Activated CD4-positive, alpha-beta T cell treated with anti-CD3 and anti-CD28 coated beads for 36 hours (primary cell): ENCODE measurements at regions of chr7 and their contacts with region 1.

Region 1: DNA sequence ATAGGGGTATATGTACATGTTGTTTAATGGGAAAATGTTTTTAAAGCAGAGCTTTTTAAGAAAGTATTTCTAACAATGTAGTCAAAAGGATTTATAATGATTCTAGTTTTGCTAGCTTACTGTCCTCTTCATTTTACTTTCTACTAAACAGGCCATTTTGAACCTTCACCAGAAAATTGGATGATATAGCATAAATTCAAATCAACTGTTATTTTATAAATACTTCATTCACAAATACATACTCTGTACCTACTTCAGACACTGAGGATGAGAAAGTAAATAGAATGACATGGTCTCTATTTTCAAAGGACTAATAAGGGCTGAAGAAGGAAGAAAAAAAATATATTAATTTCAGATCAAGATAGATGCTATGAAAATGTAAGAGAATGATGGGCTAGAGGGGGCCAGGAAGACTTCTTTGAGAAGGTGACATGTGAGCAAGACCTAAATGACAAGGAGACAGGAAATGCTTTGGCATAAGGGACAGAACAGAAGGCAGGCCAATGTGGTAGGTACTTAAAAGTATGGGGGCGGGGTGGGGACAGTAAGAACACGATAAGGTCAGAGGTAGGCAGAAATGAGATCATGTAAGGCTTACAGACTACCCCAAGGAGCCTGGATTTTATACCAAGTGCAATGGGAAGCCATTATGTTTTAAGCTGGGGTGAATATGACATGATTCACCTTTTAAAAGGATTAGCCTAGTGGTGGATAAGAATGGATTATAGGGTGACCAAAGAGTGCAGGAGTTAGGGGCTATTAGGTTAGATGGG is 5.2 kb downstream of the NAMPT start:
- DNase-seq: peak; percentile 69
- ATAC-seq: peak; percentile 75
- H3K4me3 Mint-ChIP-seq: peak overlapping the region; percentile 94
- H3K27ac Mint-ChIP-seq: peak overlapping the region; percentile 96
- H3K4me1 Mint-ChIP-seq: peaks cover 52% of the 10 kb centered on the region
- H3K27me3 Mint-ChIP-seq: no peaks in the 10 kb centered on the region

Region 2: GRCh38 chr7:106166655-106167342 is 112.8 kb before region 1 on chr7:
- CTCF ChIA-PET with region 1: no interaction called
- POLR2A ChIA-PET with region 1: no interaction called
- intact Hi-C with region 1: no loop called
- DNase-seq: peak; percentile 53
- ATAC-seq: peak; percentile 30
- H3K4me3 Mint-ChIP-seq: no peak overlapping the region
- H3K27ac Mint-ChIP-seq: no peak overlapping the region
- H3K4me1 Mint-ChIP-seq: no peaks in the 10 kb centered on the region
- H3K27me3 Mint-ChIP-seq: peaks cover 4% of the 10 kb centered on the region

Region 3: DNA sequence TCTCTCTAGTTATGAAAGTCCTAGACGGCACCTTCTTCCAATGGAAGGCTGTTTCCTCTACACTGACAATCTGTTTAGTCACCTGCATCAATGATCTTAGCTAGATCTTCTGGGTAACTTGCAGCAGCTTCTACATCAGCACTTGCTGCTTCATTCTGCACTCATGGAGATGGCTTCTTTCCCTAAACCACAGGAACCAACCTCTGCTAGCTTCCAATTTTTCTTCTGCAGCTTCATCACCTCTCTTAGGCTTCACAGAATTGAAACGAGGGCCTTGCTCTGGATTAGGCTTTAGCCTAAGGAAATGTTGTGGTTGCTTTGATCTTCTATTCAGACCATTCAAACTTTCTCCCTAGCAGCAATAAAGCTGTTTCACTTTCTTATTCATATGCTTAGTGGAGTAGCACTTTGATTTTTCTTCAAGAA is 19.5 kb before region 1 on chr7:
- CTCF ChIA-PET with region 1: interaction called, 4 read pairs
- POLR2A ChIA-PET with region 1: interaction called, 15 read pairs
- intact Hi-C with region 1: loop called (anchors 1 to 2 kb)
- DNase-seq: no peak
- ATAC-seq: peak; percentile 21
- H3K4me3 Mint-ChIP-seq: no peak overlapping the region
- H3K27ac Mint-ChIP-seq: peak overlapping the region; percentile 83
- H3K4me1 Mint-ChIP-seq: peaks cover 81% of the 10 kb centered on the region
- H3K27me3 Mint-ChIP-seq: no peaks in the 10 kb centered on the region